A549 (cell line): ENCODE measurements at regions of chr22 and their contacts with region 1.

Region 1: GRCh38 chr22:40922484-40923303 is 28.5 kb upstream of the RBX1 start:
- DNase-seq: peak; percentile 20 to 47
- ATAC-seq: peak; percentile 59 to 77; a peak in 3 of 6 replicates
- H3K4me3 ChIP-seq: no peak overlapping the region
- H3K27ac ChIP-seq: no peak overlapping the region
- H3K4me1 ChIP-seq: no peaks in the 10 kb centered on the region
- CTCF ChIP-seq: peak; percentile 62
- EP300 ChIP-seq: no peak
- POLR2A ChIP-seq: no peak
- RAD21 ChIP-seq: peak; percentile 67 to 71

Region 2: GRCh38 chr22:40334899-40335298 is 587.8 kb before region 1 on chr22:
- CTCF ChIA-PET with region 1: no interaction called
- POLR2A ChIA-PET with region 1: no interaction called
- DNase-seq: no peak
- ATAC-seq: no peak
- H3K4me3 ChIP-seq: no peak overlapping the region
- H3K27ac ChIP-seq: no peak overlapping the region
- H3K4me1 ChIP-seq: no peaks in the 10 kb centered on the region
- CTCF ChIP-seq: no peak
- EP300 ChIP-seq: no peak
- POLR2A ChIP-seq: no peak
- RAD21 ChIP-seq: no peak

Region 3: GRCh38 chr22:40764763-40765441 is 157.8 kb before region 1 on chr22:
- CTCF ChIA-PET with region 1: no interaction called
- POLR2A ChIA-PET with region 1: no interaction called
- DNase-seq: no peak
- ATAC-seq: no peak
- H3K4me3 ChIP-seq: no peak overlapping the region
- H3K27ac ChIP-seq: no peak overlapping the region
- H3K4me1 ChIP-seq: no peaks in the 10 kb centered on the region
- CTCF ChIP-seq: no peak
- EP300 ChIP-seq: no peak
- POLR2A ChIP-seq: no peak
- RAD21 ChIP-seq: no peak

Region 4: GRCh38 chr22:40791241-40791640 is 131.5 kb before region 1 on chr22:
- CTCF ChIA-PET with region 1: no interaction called
- POLR2A ChIA-PET with region 1: no interaction called
- DNase-seq: no peak
- ATAC-seq: no peak
- H3K4me3 ChIP-seq: no peak overlapping the region
- H3K27ac ChIP-seq: no peak overlapping the region
- H3K4me1 ChIP-seq: no peaks in the 10 kb centered on the region
- CTCF ChIP-seq: no peak
- EP300 ChIP-seq: no peak
- POLR2A ChIP-seq: no peak
- RAD21 ChIP-seq: no peak

Region 5: GRCh38 chr22:41022470-41023298 is 100.0 kb after region 1 on chr22:
- CTCF ChIA-PET with region 1: interaction called, 3 read pairs
- POLR2A ChIA-PET with region 1: interaction called, 13 read pairs
- DNase-seq: peak; percentile 52 to 83
- ATAC-seq: peak; percentile 80 to 86
- H3K4me3 ChIP-seq: peak overlapping the region; percentile 59
- H3K27ac ChIP-seq: peak overlapping the region; percentile 85 to 100
- H3K4me1 ChIP-seq: peaks cover 7% of the 10 kb centered on the region; the same call in 1 of the 3 replicates
- CTCF ChIP-seq: no peak
- EP300 ChIP-seq: no peak; a peak in 1 of 5 replicates
- POLR2A ChIP-seq: 0 out of 2 replicates have a peak, but pooled peaks have one; percentile 4
- RAD21 ChIP-seq: no peak

Region 6: GRCh38 chr22:41091132-41092022 is 168.7 kb after region 1 on chr22:
- CTCF ChIA-PET with region 1: interaction called, 13 read pairs
- POLR2A ChIA-PET with region 1: no interaction called
- DNase-seq: peak; percentile 91 to 98
- ATAC-seq: peak; percentile 87 to 92
- H3K4me3 ChIP-seq: peak overlapping the region; percentile 90
- H3K27ac ChIP-seq: peak overlapping the region; percentile 99 to 100
- H3K4me1 ChIP-seq: peaks cover 22% of the 10 kb centered on the region
- CTCF ChIP-seq: no peak
- EP300 ChIP-seq: no peak
- POLR2A ChIP-seq: peak; percentile 76
- RAD21 ChIP-seq: no peak; a peak in 1 of 5 replicates